ENCODE measurements at regions of chr3 and their contacts with region 1.

Region 1: DNA sequence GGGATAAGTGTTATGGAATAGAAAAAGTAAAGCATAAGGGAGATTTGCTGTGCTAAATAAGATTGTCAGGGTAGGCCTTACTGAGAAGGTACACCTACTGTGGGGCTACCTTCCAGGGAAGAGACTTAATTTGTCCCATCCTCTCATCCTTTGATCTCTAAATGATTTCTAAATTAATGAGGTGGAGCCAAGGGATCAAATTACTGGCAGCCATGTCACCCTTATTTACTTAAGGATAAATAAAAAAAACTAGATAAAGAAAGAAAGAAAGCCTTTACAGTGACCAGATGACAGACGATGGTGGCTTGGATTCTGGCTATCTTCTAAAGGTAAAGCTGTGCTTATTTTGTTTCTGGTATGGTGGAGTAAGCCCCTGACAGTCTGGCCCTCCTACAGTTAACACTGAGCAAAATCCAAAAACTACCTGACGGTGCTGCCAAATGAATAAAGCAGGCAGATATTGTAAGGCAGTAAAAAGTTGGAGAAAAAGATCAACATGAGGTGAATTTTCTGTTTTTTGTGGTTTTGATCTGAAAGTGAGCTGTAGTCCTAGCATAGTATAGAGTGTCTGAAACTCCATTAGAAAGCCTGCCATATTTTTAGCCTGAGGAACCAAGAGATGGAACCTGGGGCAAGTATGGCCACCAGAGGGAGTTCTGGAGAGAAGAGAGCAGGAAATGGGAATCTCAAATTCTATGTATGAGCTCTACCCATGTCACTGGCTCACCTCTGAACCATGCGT is 285.1 kb upstream of the MANF start:
- DNase-seq: peak; percentile 18
- H3K4me3 ChIP-seq: no peak overlapping the region
- H3K27ac ChIP-seq: no peak overlapping the region
- H3K27me3 ChIP-seq: no peaks in the 10 kb centered on the region
- CTCF ChIP-seq: peak; percentile 91

Region 2: DNA sequence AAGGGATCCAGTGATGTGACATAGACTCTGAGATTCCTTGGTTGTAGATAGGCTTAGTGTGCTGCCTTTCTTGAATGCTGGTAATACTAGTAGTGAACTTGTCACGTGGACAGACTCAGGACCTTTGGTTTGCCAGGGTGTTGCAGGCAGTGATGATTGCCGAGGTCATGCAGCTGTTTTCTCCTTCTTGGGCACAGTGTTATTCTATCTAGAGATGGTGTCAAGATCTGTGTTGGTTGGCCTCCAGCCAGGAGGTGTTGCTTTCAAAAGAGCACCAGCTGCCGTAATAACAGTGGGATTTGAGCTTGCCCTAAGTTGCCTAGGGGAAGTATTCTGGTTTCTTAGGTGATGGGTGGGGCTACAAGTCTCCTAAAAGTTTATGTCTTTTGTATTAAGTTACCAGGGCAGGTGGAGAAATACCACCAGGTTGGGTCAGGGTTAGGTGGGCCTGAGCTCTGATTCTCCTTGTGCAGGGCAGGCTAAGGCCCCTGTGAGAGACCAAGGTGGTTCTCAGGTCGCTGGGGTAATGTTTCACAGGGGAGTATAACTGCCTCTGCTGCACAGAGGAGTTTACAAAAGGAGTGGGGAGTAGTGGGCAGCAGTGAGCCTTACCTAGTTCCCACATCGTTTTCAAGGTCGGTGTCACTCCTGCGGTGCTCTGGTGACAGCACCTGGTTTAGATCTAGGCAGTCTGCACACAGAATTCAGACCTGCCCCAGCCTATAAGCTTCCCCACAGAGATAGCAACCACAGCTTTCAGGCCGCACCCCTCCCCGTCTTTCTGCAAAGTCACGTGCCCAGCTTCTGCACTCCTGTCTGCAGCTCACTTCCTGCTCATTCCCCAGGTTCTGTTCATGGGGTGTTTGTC is 75.0 kb before region 1 on chr3:
- CTCF ChIA-PET with region 1: no interaction called
- POLR2A ChIA-PET with region 1: no interaction called
- DNase-seq: no peak
- H3K4me3 ChIP-seq: no peak overlapping the region
- H3K27ac ChIP-seq: no peak overlapping the region
- H3K27me3 ChIP-seq: no peaks in the 10 kb centered on the region
- CTCF ChIP-seq: no peak

Region 3: DNA sequence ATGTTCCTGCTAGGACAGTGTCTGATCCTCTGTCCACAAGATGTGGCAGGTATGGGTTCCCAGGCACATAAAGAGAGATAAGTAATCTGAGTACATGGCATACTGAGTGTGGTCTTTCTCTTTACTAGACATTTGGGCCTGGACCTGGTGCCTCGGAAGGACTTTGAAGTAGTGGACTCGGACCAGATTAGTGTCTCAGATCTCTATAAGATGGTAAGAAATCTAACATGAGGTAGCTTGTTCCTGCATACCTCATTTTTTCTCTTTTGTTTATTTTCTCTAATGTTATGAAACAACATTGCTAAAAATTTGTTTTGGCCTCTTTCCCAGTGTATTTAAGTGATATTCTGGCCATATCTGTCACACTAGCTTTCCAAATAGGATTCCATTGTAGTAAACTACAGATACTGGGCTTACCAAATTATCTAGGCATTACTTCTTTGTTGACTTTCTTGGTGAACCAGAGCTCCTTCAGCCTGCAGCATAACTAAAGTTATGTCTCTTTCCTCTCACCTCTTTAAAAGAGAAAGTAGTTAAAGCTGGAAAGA is 24.7 kb before region 1 on chr3:
- CTCF ChIA-PET with region 1: interaction called, 12 read pairs
- POLR2A ChIA-PET with region 1: no interaction called
- DNase-seq: no peak
- H3K4me3 ChIP-seq: no peak overlapping the region
- H3K27ac ChIP-seq: no peak overlapping the region
- H3K27me3 ChIP-seq: no peaks in the 10 kb centered on the region
- CTCF ChIP-seq: no peak

Region 4: GRCh38 chr3:51311055-51311454 is 211.1 kb after region 1 on chr3:
- CTCF ChIA-PET with region 1: interaction called, 14 read pairs
- POLR2A ChIA-PET with region 1: no interaction called
- DNase-seq: peak; percentile 7
- H3K4me3 ChIP-seq: no peak overlapping the region
- H3K27ac ChIP-seq: no peak overlapping the region
- H3K27me3 ChIP-seq: peaks cover 6% of the 10 kb centered on the region
- CTCF ChIP-seq: peak; percentile 62

Region 5: GRCh38 chr3:51362476-51362875 is 262.5 kb after region 1 on chr3:
- CTCF ChIA-PET with region 1: interaction called, 205 read pairs
- POLR2A ChIA-PET with region 1: no interaction called
- DNase-seq: no peak
- H3K4me3 ChIP-seq: no peak overlapping the region
- H3K27ac ChIP-seq: no peak overlapping the region
- H3K27me3 ChIP-seq: peaks cover 6% of the 10 kb centered on the region
- CTCF ChIP-seq: no peak

Region 6: GRCh38 chr3:51379301-51379700 is 279.3 kb after region 1 on chr3:
- CTCF ChIA-PET with region 1: interaction called, 47 read pairs
- POLR2A ChIA-PET with region 1: no interaction called
- DNase-seq: no peak
- H3K4me3 ChIP-seq: no peak overlapping the region
- H3K27ac ChIP-seq: no peak overlapping the region
- H3K27me3 ChIP-seq: peaks cover 1% of the 10 kb centered on the region
- CTCF ChIP-seq: no peak

Measured in AG04450 (cell line).